BJ (cell line): ENCODE measurements at regions of chr19 and their contacts with region 1.

Region 1: DNA sequence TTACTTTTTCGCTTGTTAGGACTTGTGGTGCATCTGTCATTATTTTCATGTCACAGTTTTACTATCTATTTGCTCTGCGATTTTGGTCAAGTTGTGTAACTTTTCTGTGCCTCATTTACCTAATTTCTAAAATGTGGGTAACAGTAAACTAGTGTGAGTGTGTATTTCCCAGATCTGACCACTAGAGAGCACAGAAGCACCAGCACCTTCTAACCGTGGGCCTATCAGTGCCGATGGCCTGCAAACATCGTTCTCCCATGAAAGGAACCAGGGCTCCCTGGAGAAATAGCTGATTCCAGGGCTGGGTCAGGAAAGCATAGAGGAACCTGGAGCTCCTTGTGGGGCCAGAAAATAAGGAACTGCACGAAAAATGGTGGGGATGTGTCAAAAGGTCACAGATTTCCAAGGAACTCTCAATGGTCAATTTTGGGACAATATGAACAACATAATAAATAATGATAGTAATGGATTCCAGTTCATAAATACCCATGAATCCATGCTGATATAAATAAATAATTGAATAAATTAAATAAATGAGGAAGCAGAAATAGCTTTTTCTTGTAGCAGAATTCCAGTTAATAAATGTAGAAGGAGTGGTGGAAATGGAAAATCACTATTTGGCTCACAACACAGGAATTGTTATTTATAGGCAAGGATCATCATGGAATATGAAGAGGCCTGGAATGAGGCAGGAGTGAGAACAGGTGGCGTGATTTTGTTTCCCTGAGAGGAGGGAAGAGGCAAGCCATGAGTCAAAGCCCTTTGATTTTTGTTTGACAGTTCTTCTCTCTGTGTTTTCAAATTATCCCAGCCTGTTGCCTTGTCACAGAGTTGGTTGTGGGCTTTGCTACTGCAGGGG is 31.1 kb downstream of the CEACAM8 start:
- DNase-seq: no peak
- H3K4me3 ChIP-seq: no peak overlapping the region
- H3K27me3 ChIP-seq: peaks cover 20% of the 10 kb centered on the region
- CTCF ChIP-seq: peak; percentile 80

Region 2: DNA sequence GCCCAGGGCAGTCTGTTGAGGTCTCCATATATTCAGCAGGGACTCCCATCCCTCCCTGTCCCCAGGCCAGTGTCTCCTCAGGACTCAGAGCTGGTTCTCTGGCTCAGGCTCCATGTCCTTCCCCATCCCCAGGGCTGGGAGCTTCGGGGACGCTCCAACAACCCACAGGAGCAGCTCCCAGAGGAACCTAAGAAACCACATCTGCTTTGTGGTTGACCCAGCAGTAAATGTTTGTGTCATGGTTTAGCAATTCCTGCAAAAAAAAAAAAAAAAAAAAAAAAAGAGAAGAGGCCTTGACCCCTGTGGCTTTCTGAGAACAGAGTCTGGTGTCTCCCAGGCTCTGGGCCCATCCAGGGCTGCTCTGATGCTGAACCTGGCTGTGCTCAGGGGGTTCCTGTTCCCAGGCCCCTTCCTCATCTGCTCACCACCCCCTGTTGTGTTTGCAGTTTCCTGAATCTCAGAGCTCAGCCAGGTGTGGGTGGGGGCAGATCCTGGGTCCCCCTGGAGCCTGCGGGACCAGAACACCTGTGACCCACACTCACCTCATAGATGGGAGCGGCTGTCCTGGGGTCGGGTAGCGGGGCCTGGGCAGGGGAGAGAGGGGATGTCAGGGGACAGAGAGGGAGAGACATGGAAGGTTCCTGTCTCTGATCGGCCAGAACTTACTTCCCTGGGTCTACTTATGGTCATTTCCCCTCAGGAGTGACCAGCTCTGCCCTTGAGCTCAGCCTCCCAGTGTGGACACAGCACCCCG is 10.1 kb before region 1 on chr19:
- CTCF ChIA-PET with region 1: interaction called, 22 read pairs
- POLR2A ChIA-PET with region 1: no interaction called
- DNase-seq: peak; percentile 67
- H3K4me3 ChIP-seq: no peak overlapping the region
- H3K27me3 ChIP-seq: peaks cover 39% of the 10 kb centered on the region
- CTCF ChIP-seq: no peak

Region 3: DNA sequence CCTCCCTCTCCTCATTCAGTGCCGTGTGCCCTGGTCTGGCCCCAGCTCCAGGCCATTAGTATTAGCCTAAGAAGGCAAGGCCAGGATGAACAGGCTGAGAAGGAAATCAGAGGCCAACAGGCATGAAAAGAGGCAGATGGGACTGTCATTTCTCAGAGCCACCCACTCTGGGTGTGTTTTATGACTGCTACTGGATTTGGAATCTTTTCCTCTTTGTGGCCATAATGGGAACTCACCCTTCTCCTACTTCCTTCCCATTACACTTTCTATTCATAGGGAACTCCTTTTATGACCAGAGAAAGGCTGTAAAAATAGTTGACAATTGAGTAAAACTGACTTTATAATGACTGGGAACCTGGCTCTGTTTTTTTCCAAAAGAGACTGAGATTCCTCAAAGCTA is 13.4 kb after region 1 on chr19:
- CTCF ChIA-PET with region 1: interaction called, 12 read pairs
- POLR2A ChIA-PET with region 1: no interaction called
- DNase-seq: no peak
- H3K4me3 ChIP-seq: no peak overlapping the region
- H3K27me3 ChIP-seq: peaks cover 7% of the 10 kb centered on the region; the same call in 1 of the 2 replicates
- CTCF ChIP-seq: no peak